ENCODE measurements at regions of chr3 and their contacts with region 1.

Region 1: GRCh38 chr3:128095222-128095703 is 28.3 kb downstream of the RUVBL1 start:
- DNase-seq: peak; percentile 56 to 86
- H3K4me3 ChIP-seq: no peak overlapping the region
- H3K27ac ChIP-seq: no peak overlapping the region
- H3K4me1 ChIP-seq: no peaks in the 10 kb centered on the region
- H3K27me3 ChIP-seq: no peaks in the 10 kb centered on the region
- CTCF ChIP-seq: peak; percentile 76

Region 2: DNA sequence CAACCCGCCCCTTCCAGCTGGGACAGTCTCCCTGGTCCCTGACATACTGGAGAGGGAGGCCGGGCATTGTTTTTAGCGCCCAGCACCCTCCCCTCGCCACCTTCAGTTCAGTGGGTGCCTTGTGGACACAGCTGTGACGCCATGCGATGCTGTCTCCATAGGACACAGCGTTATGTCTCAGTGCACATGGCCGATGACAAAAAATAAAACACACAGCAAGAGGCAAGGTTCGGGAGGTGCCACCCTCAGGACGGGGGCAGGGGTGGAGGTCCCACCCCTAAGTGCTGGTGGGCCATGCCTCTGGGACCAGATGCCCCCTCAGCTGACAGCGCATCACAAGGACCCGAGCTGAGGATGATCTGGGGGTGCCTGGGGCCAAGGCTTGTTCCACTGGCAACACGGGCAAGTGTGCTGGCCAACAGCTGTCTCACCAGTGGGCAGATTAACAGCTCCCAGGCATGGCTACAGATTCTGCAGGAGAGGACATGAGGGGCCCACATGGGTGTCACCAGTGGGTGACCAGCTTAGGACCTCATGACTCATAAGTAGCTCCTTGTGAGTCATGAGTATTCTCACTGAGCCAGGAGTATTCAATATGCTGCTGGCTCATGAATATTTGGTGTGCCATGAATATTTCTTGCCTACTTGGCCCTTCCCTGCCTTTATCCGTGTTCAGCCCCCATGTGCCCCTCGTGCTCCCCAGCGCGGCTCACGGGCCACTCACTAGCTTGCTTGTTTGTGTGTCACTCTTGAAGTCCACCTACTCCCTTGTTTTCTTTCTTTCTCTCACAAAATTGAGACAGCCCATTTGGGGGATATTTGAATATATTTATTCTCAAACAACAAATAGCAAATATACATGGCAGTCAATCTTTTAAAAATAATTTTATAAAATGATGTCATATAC is 1030.5 kb before region 1 on chr3:
- CTCF ChIA-PET with region 1: no interaction called
- POLR2A ChIA-PET with region 1: no interaction called
- intact Hi-C with region 1: no loop called
- DNase-seq: peak in 1 of 2 experiments; percentile 41
- H3K4me3 ChIP-seq: no peak overlapping the region
- H3K27ac ChIP-seq: no peak overlapping the region
- H3K4me1 ChIP-seq: 0 out of 2 replicates have a peak, but pooled peaks cover 5% of the 10 kb centered on the region
- H3K27me3 ChIP-seq: peaks cover 9% of the 10 kb centered on the region
- CTCF ChIP-seq: no peak

Region 3: DNA sequence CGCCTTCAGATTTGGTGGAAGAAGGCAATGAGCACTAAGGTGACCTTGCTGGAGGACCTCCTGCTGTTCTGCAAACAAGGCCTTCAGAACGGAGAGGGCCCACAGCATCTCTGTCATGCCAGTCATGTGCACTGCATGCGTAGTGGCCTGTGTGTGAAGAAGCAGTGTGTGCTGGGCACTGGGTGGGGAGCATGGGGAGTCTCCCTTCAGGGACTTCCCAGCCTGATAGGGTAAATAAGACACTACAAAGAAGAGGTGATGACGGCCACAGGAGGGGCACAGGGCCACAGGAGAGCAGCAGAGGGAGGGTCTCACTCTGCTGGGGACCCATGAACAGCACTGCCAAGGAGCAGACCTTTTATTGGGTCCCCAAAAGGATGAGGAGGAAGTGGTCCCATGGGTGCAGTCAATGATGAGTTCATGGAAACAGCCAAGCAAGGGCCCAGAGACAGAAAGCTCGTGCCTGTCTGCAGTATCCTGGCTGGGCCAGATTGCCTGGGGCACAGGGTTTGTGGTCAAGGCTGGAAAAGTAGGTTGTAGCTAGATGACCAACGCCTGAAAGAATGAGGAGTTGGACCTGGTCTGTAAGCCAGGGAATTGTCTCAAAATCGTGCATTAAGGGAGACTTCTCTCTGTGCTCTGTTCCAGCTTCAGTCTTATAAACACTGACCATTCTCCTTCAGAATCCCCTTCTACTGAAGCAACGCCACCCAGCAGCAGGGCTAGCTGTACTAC is 110.9 kb before region 1 on chr3:
- CTCF ChIA-PET with region 1: no interaction called
- POLR2A ChIA-PET with region 1: no interaction called
- intact Hi-C with region 1: no loop called
- DNase-seq: peak; percentile 62 to 71
- H3K4me3 ChIP-seq: no peak overlapping the region
- H3K27ac ChIP-seq: no peak overlapping the region
- H3K4me1 ChIP-seq: peaks cover 21% of the 10 kb centered on the region
- H3K27me3 ChIP-seq: no peaks in the 10 kb centered on the region
- CTCF ChIP-seq: no peak

Region 4: DNA sequence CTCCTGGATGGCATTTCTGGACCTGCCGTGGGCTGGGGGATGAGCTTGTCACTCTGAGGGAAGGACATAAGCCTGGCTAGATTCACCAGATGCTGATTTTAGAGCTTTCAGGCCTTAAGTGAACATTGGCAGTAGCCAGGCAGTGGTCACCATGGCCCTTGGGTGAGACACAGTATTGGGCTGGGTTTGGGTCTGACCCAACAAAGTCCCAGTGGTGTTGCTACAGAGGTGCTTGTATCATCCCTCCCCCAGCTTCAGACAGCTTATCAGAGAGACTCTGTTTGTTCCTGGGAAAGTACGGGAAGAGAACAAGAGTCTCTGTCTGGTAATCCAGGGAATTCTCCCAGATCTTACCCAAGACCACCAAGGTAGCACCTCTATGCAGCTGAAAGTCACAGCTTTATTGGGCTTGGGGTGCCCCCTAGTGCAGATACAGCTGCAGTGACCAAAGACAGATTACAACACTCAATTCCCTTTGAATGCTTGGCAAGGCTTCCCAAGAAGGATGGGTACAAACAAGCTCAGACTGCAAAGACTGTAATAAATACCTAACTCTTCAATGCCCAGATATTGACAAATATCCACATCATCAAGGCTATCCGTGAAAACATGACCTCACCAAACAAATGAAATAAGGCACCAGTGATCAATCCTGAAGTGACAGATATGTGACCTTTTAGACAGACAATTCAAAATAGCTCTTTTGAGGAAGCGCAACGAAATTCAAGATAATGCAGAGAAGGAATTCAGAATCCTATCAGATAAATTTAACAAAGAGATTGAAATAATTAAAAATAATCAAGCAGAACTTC is 38.2 kb after region 1 on chr3:
- CTCF ChIA-PET with region 1: no interaction called
- POLR2A ChIA-PET with region 1: no interaction called
- intact Hi-C with region 1: loop called (anchors 1 kb)
- DNase-seq: peak in 1 of 2 experiments; percentile 25
- H3K4me3 ChIP-seq: no peak overlapping the region
- H3K27ac ChIP-seq: no peak overlapping the region
- H3K4me1 ChIP-seq: no peaks in the 10 kb centered on the region
- H3K27me3 ChIP-seq: no peaks in the 10 kb centered on the region
- CTCF ChIP-seq: peak; percentile 70

Region 5: GRCh38 chr3:128426128-128426921 is 331.1 kb after region 1 on chr3:
- CTCF ChIA-PET with region 1: no interaction called
- POLR2A ChIA-PET with region 1: no interaction called
- intact Hi-C with region 1: loop called (anchors 10 kb)
- DNase-seq: peak in 1 of 2 experiments; percentile 76
- H3K4me3 ChIP-seq: peak overlapping the region; percentile 20; the same call in 1 of the 2 replicates
- H3K27ac ChIP-seq: no peak overlapping the region
- H3K4me1 ChIP-seq: peaks cover 55% of the 10 kb centered on the region
- H3K27me3 ChIP-seq: no peaks in the 10 kb centered on the region
- CTCF ChIP-seq: peak; percentile 76

Region 6: GRCh38 chr3:128497387-128498126 is 402.3 kb after region 1 on chr3:
- CTCF ChIA-PET with region 1: no interaction called
- POLR2A ChIA-PET with region 1: no interaction called
- intact Hi-C with region 1: loop called (anchors 1 kb)
- DNase-seq: peak in 1 of 2 experiments; percentile 59
- H3K4me3 ChIP-seq: no peak overlapping the region
- H3K27ac ChIP-seq: no peak overlapping the region
- H3K4me1 ChIP-seq: no peaks in the 10 kb centered on the region
- H3K27me3 ChIP-seq: no peaks in the 10 kb centered on the region
- CTCF ChIP-seq: peak; percentile 52; the same call in 1 of the 2 replicates

Region 7: DNA sequence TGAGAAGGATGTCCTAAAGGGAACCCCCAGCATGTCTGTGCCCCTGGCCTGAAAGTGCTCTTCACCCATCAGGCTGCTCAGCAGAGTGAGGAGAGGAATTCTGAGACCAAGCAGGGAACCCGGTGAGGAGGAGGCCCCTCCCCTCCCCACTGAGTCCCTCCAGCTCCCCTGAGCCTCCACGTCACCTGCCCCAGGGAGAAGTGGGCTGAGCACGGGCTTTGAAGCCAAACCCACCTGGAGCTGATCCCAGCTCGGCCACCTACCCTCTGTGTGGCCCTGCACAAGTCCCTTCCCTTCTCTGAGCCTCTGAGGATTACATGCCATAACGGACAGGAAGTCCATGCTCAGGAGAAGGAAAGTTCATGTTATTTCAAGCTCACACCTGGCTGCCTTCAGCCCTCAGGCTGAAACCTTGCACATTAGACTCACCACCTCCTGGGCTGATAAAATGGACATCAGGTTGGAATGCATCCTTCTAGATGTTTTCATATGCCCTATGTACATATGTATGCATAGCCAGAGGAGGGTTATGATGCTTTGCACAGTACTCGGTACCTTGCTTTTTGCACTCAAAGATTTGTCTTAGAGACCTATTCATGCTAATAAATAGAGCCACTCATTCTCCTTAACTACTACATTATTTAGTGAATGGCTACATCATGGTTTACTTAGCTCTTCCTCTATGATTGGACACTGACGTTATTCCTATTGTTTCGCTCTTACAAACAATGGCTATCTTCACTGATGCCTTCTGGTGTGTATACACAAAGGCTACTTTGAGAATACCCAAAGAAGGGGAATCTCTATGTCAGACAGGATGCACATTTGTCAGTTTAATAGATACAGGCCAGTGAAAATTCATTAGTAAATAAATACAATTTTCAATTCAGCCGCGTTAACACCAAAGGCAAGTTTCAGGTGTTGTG is 429.4 kb after region 1 on chr3:
- CTCF ChIA-PET with region 1: no interaction called
- POLR2A ChIA-PET with region 1: no interaction called
- intact Hi-C with region 1: no loop called
- DNase-seq: no peak
- H3K4me3 ChIP-seq: no peak overlapping the region
- H3K27ac ChIP-seq: no peak overlapping the region
- H3K4me1 ChIP-seq: no peaks in the 10 kb centered on the region
- H3K27me3 ChIP-seq: peaks cover 38% of the 10 kb centered on the region
- CTCF ChIP-seq: no peak

Measured in PC-9 (cell line).